ENCODE measurements at regions of chr16 and their contacts with region 1.

Region 1: DNA sequence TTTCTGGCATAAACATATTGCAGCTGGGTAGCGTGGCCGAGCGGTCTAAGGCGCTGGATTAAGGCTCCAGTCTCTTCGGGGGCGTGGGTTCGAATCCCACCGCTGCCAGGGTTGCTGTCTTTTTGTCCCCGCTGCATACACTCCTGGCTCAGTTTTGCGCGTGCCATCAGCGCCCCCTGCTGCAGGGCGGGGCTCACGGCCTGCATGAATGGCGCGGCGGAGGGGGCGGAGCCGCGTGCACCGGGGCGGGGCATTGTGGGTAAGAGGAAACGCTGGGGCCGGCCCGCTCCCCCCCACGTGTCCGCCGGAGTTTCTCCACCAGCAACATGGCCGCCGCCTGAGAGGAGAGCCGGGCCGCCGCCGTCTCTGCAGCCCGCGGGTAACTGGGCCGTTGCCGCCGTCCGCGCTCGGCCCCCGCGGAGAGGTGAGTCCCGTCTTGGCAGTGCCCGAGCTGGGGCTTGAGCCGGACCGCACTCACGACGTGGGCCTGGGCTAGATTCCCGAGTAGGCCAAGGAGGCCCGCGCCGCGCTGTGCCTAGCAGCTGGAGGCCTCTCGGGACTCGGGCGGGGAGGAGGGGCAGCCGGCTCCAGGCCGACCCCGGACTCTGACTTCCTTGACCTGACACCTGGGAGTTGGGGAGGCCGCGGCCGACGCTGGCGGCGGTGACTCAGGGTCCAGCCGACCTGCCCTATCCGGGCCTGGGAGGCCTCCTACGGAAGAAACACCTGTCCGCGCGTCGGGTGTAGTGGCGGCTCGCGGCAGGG is at the start of gene POLR3E:
- DNase-seq: peak; percentile 99
- ATAC-seq: peak; percentile 88
- H3K4me3 Mint-ChIP-seq: peak within 1 kb of the TSS; percentile 95
- H3K27ac Mint-ChIP-seq: peak within 1 kb of the TSS; percentile 96
- H3K4me1 Mint-ChIP-seq: peaks cover 31% of the 10 kb centered on the region
- H3K27me3 Mint-ChIP-seq: no peaks in the 10 kb centered on the region
- total RNA-seq, gene POLR3E: 56.5 to 88.0 TPM

Region 2: GRCh38 chr16:22206013-22206841 is 91.1 kb before region 1 on chr16 and contains the start of gene EEF2K:
- CTCF ChIA-PET with region 1: interaction called, 113 read pairs
- DNase-seq: peak; percentile 92
- ATAC-seq: peak; percentile 95
- H3K4me3 Mint-ChIP-seq: peak within 1 kb of the TSS; percentile 97
- H3K27ac Mint-ChIP-seq: peak within 1 kb of the TSS; percentile 84
- H3K4me1 Mint-ChIP-seq: peaks cover 41% of the 10 kb centered on the region
- H3K27me3 Mint-ChIP-seq: no peaks in the 10 kb centered on the region
- total RNA-seq, gene EEF2K: 34.8 to 36.7 TPM

Region 3: DNA sequence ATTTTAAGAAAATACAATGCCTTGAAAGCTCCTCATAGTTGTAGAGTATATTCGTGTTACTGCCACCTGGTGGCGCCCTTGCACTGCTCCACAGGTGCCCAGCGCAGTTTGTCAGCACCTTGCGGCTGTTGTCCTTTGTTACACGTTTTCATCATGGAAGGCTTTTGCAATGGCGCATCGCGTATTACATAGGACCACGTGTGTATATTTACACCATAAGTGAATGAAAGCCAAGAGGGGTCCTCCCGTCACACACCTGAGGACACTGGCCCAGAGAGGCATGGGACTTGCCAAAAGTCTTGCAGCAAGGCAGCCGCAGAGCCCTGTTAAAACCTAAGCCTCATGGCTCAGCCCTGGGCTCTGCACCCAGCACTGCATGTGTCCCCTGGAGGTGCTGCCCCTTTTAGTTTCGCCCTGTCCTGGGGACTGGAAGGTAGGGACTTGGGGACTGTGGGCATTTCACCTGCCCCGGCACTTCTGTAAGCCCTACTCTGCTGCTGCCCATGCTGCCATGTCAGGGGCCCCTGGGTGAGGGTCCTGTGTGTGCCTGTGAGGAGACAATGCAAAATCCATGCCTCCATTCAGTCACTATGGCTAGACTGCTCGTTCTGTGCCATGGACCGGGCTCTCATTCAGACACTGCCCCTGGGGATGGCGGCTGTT is 24.2 kb after region 1 on chr16:
- CTCF ChIA-PET with region 1: interaction called, 15 read pairs
- DNase-seq: peak; percentile 80
- ATAC-seq: peak; percentile 81
- H3K4me3 Mint-ChIP-seq: no peak overlapping the region
- H3K27ac Mint-ChIP-seq: no peak overlapping the region
- H3K4me1 Mint-ChIP-seq: peaks cover 2% of the 10 kb centered on the region
- H3K27me3 Mint-ChIP-seq: no peaks in the 10 kb centered on the region

Measured in activated CD8-positive, alpha-beta memory T cell treated with anti-CD3 and anti-CD28 coated beads, Interleukin-2, amount 10 ng/mL, durations not matched to agents 7 days and 5 days (primary cell).